Activated CD4-positive, alpha-beta T cell treated with anti-CD3 and anti-CD28 coated beads for 36 hours (primary cell): ENCODE measurements at regions of chr3 and their contacts with region 1.

Region 1: GRCh38 chr3:39288300-39288808 is 8.5 kb upstream of the CX3CR1 start:
- DNase-seq: peak; percentile 90
- ATAC-seq: peak; percentile 96
- H3K4me3 Mint-ChIP-seq: no peak overlapping the region
- H3K27ac Mint-ChIP-seq: no peak overlapping the region
- H3K4me1 Mint-ChIP-seq: peaks cover 13% of the 10 kb centered on the region
- H3K27me3 Mint-ChIP-seq: no peaks in the 10 kb centered on the region

Region 2: GRCh38 chr3:39086144-39086543 is 202.2 kb before region 1 on chr3:
- CTCF ChIA-PET with region 1: interaction called, 21 read pairs
- POLR2A ChIA-PET with region 1: no interaction called
- intact Hi-C with region 1: no loop called
- DNase-seq: no peak
- ATAC-seq: no peak
- H3K4me3 Mint-ChIP-seq: no peak overlapping the region
- H3K27ac Mint-ChIP-seq: no peak overlapping the region
- H3K4me1 Mint-ChIP-seq: peaks cover 18% of the 10 kb centered on the region
- H3K27me3 Mint-ChIP-seq: no peaks in the 10 kb centered on the region

Region 3: GRCh38 chr3:39126532-39127071 is 161.8 kb before region 1 on chr3:
- CTCF ChIA-PET with region 1: interaction called, 60 read pairs
- POLR2A ChIA-PET with region 1: no interaction called
- intact Hi-C with region 1: loop called (anchors 1 kb)
- DNase-seq: peak; percentile 66
- ATAC-seq: peak; percentile 73
- H3K4me3 Mint-ChIP-seq: no peak overlapping the region
- H3K27ac Mint-ChIP-seq: no peak overlapping the region
- H3K4me1 Mint-ChIP-seq: peaks cover 14% of the 10 kb centered on the region
- H3K27me3 Mint-ChIP-seq: no peaks in the 10 kb centered on the region

Region 4: GRCh38 chr3:39208463-39209055 is 79.8 kb before region 1 on chr3:
- CTCF ChIA-PET with region 1: interaction called, 20 read pairs
- POLR2A ChIA-PET with region 1: no interaction called
- intact Hi-C with region 1: loop called (anchors 1 kb)
- DNase-seq: peak; percentile 61
- ATAC-seq: no peak
- H3K4me3 Mint-ChIP-seq: no peak overlapping the region
- H3K27ac Mint-ChIP-seq: no peak overlapping the region
- H3K4me1 Mint-ChIP-seq: peaks cover 7% of the 10 kb centered on the region
- H3K27me3 Mint-ChIP-seq: no peaks in the 10 kb centered on the region

Region 5: DNA sequence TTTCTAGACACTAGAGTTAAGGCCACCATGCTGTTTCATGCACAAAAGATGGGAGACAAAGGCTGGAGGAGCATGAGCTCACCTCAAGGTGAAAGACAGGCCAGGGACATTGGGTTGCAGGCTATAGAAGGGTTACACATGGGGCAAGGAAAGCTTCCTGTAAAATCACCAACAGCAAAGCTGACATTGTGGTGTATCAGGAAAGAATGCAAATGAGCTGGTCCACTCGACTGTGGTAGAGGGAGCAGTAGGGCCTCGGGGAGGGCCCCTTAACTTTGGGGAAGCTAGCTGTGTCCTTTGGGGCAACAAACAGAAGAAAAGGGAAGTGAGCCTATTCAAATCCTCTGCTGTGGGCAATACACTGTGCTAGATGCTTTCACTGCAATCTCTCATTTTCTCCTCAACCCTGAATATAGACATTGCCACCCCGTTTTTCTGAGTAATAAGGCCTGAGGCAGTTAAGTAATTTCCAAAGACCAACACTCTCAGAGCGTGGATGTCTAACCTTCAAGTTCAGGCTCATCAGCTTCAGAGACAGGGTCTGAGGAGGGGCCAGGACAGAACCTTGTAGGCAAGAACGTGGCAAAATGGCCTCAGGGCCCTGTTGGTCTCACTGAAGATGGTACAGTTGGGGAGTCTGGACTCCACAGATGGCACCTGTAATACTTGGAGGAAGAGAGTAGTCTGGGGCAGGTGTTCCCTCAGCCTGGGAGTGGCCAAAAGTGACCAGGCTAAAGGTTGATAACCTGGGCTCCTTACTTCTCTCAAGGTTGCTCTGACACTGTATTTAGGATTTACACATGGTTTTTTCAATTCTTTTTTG is 32.6 kb before region 1 on chr3:
- CTCF ChIA-PET with region 1: interaction called, 12 read pairs
- POLR2A ChIA-PET with region 1: no interaction called
- intact Hi-C with region 1: no loop called
- DNase-seq: peak; percentile 49
- ATAC-seq: peak; percentile 85
- H3K4me3 Mint-ChIP-seq: no peak overlapping the region
- H3K27ac Mint-ChIP-seq: peak overlapping the region; percentile 22
- H3K4me1 Mint-ChIP-seq: peaks cover 35% of the 10 kb centered on the region
- H3K27me3 Mint-ChIP-seq: peaks cover 3% of the 10 kb centered on the region

Region 6: GRCh38 chr3:39273119-39273518 is 15.2 kb before region 1 on chr3:
- CTCF ChIA-PET with region 1: interaction called, 32 read pairs
- POLR2A ChIA-PET with region 1: no interaction called
- intact Hi-C with region 1: no loop called
- DNase-seq: no peak
- ATAC-seq: no peak
- H3K4me3 Mint-ChIP-seq: no peak overlapping the region
- H3K27ac Mint-ChIP-seq: no peak overlapping the region
- H3K4me1 Mint-ChIP-seq: peaks cover 12% of the 10 kb centered on the region
- H3K27me3 Mint-ChIP-seq: no peaks in the 10 kb centered on the region

Region 7: GRCh38 chr3:39378088-39378487 is 89.7 kb after region 1 on chr3:
- CTCF ChIA-PET with region 1: interaction called, 21 read pairs
- POLR2A ChIA-PET with region 1: no interaction called
- intact Hi-C with region 1: loop called (anchors 1 kb)
- DNase-seq: peak; percentile 77
- ATAC-seq: peak; percentile 84
- H3K4me3 Mint-ChIP-seq: no peak overlapping the region
- H3K27ac Mint-ChIP-seq: no peak overlapping the region
- H3K4me1 Mint-ChIP-seq: peaks cover 10% of the 10 kb centered on the region
- H3K27me3 Mint-ChIP-seq: no peaks in the 10 kb centered on the region

Region 8: DNA sequence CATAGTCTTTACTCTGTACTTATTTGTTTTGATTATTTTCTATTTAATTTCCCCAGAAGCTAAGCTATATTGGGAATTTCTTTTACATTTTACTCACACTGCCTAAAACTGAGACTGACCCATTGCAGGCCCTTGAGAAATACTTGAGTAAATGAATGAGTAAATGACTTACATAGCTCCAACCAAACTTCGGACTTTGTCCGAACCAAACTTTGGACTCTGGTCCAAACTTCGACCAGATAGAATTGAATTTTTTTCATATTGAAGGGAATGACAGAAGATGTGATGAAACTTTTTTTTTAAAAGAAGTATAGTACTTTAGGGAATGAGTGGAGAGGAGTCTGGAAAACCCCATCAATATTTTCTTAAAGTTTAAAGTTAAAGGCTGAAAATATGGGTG is 445.4 kb after region 1 on chr3:
- CTCF ChIA-PET with region 1: no interaction called
- POLR2A ChIA-PET with region 1: no interaction called
- intact Hi-C with region 1: no loop called
- DNase-seq: no peak
- ATAC-seq: no peak
- H3K4me3 Mint-ChIP-seq: no peak overlapping the region
- H3K27ac Mint-ChIP-seq: no peak overlapping the region
- H3K4me1 Mint-ChIP-seq: no peaks in the 10 kb centered on the region
- H3K27me3 Mint-ChIP-seq: peaks cover 2% of the 10 kb centered on the region

Region 9: GRCh38 chr3:39879581-39879980 is 591.2 kb after region 1 on chr3:
- CTCF ChIA-PET with region 1: no interaction called
- POLR2A ChIA-PET with region 1: no interaction called
- intact Hi-C with region 1: no loop called
- DNase-seq: no peak
- ATAC-seq: no peak
- H3K4me3 Mint-ChIP-seq: no peak overlapping the region
- H3K27ac Mint-ChIP-seq: no peak overlapping the region
- H3K4me1 Mint-ChIP-seq: no peaks in the 10 kb centered on the region
- H3K27me3 Mint-ChIP-seq: peaks cover 2% of the 10 kb centered on the region